Naive thymus-derived CD4-positive, alpha-beta T cell (primary cell): ENCODE measurements at regions of chr3 and their contacts with region 1.

Region 1: GRCh38 chr3:177994976-177995375 is 541.3 kb upstream of the KCNMB2 start:
- DNase-seq: no peak
- ATAC-seq: no peak
- H3K4me3 ChIP-seq: no peak overlapping the region
- H3K4me3 Mint-ChIP-seq: no peak overlapping the region
- H3K27ac ChIP-seq: no peak overlapping the region
- H3K27ac Mint-ChIP-seq: peak overlapping the region in 3 of 9 donors; percentile 16 to 52 (median 40)
- H3K4me1 ChIP-seq: peaks cover 6 to 8% of the 10 kb centered on the region in 2 donors
- H3K4me1 Mint-ChIP-seq: peaks cover 5 to 28% (median 23%) of the 10 kb centered on the region in 7 donors
- H3K27me3 ChIP-seq: no peaks in the 10 kb centered on the region
- H3K27me3 Mint-ChIP-seq: no peaks in the 10 kb centered on the region

Region 2: DNA sequence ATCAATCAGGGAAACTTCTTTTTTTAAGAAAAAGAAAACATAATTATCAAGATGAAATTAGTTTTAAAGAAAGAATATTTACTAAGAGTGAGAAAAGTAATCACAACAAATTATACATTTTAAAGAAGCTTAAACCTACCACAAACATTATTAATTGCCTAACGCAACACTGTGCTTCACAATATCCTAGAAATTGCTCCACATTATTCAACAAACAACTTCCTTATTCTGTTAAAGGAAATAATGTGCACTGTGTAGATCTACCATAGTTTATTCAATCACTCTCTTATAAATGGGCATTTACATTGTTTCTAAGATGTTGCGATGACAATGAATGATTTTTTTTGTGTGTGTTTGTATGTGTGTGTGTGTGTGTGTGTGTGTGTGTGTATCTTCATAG is 15.3 kb after region 1 on chr3:
- CTCF ChIA-PET with region 1: no interaction called
- POLR2A ChIA-PET with region 1: no interaction called
- intact Hi-C with region 1: loop called in 1 of 2 experiments (anchors 2 kb)
- DNase-seq: no peak
- ATAC-seq: peak; percentile 50
- H3K4me3 ChIP-seq: no peak overlapping the region
- H3K4me3 Mint-ChIP-seq: no peak overlapping the region
- H3K27ac ChIP-seq: no peak overlapping the region
- H3K27ac Mint-ChIP-seq: no peak overlapping the region
- H3K4me1 ChIP-seq: peaks cover 0 to 15% of the 10 kb centered on the region in 2 donors
- H3K4me1 Mint-ChIP-seq: peaks cover 8 to 25% (median 22%) of the 10 kb centered on the region in 7 donors
- H3K27me3 ChIP-seq: no peaks in the 10 kb centered on the region
- H3K27me3 Mint-ChIP-seq: no peaks in the 10 kb centered on the region